Activated CD4-positive, alpha-beta memory T cell treated with anti-CD3 and anti-CD28 coated beads, Interleukin-2, amount 10 ng/mL, durations not matched to agents 7 days and 5 days (primary cell): ENCODE measurements at regions of chr14 and their contacts with region 1.

Region 1: DNA sequence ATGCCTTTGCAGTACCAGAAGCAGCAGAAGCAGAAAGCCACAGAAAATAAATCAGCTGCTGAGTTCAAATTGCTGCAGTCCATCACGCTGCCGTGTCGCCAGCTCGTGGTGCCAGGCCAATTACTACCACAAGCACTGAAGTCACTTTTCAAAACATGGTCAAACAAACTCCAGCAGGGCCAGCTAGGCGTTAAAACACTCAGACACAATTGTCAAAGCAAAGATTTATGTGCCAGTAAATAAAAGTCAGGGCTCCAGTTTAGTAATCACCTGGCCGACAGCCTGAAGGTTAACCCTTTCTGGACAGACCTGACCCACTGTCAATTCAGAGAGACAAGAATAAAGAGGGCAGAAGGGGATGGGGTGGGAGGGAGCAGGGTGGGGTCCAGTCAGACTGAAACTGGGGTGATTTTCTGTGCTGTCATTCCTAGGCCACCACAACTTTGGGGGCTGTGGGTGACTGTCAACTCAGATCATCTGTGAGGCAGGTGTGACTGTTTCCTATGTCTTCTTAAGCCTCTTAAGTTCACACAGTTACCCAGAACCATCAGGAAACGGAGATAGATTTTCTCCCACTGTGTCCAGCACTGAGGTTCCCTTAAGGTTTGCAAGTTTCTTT is 109.8 kb upstream of the FUT8 start:
- DNase-seq: peak; percentile 64
- H3K4me3 Mint-ChIP-seq: peak overlapping the region; percentile 9
- H3K27ac Mint-ChIP-seq: peak overlapping the region; percentile 44
- H3K4me1 Mint-ChIP-seq: peaks cover 56% of the 10 kb centered on the region
- H3K27me3 Mint-ChIP-seq: no peaks in the 10 kb centered on the region

Region 2: GRCh38 chr14:65263177-65263788 is 39.4 kb before region 1 on chr14:
- CTCF ChIA-PET with region 1: no interaction called
- POLR2A ChIA-PET with region 1: no interaction called
- DNase-seq: no peak
- H3K4me3 Mint-ChIP-seq: no peak overlapping the region
- H3K27ac Mint-ChIP-seq: no peak overlapping the region
- H3K4me1 Mint-ChIP-seq: no peaks in the 10 kb centered on the region
- H3K27me3 Mint-ChIP-seq: peaks cover 3% of the 10 kb centered on the region

Region 3: GRCh38 chr14:65287264-65288131 is 15.2 kb before region 1 on chr14:
- CTCF ChIA-PET with region 1: interaction called, 3 read pairs
- POLR2A ChIA-PET with region 1: interaction called, 34 read pairs
- DNase-seq: peak; percentile 63
- H3K4me3 Mint-ChIP-seq: peak overlapping the region; percentile 73
- H3K27ac Mint-ChIP-seq: peak overlapping the region; percentile 94
- H3K4me1 Mint-ChIP-seq: peaks cover 71% of the 10 kb centered on the region
- H3K27me3 Mint-ChIP-seq: no peaks in the 10 kb centered on the region